PC-9 (cell line): ENCODE measurements at regions of chr11 and their contacts with region 1.

Region 1: GRCh38 chr11:28730336-28730735 is 622.1 kb downstream of the METTL15 start:
- DNase-seq: no peak
- H3K4me3 ChIP-seq: no peak overlapping the region
- H3K27ac ChIP-seq: no peak overlapping the region
- H3K4me1 ChIP-seq: no peaks in the 10 kb centered on the region
- H3K27me3 ChIP-seq: no peaks in the 10 kb centered on the region
- CTCF ChIP-seq: no peak

Region 2: DNA sequence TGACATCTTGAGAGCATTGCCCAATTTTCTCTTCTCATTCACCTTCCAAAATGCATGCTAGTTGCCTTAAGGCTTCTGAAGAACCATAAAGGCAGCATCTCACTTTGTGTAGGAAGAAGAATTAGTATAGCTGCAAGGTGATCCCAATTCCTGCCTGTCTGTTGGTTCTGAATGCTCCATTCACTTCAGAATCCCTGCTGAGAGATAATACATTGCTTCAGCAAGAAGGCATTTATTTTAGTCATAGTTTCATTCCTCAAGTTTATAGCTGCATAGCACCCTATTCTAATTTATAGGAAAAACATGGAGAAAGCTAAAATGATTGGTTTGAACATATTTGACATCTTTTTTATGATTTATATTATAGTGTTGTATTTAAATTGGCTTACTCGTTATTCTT is 440.9 kb before region 1 on chr11:
- CTCF ChIA-PET with region 1: no interaction called
- POLR2A ChIA-PET with region 1: interaction called, 11 read pairs
- intact Hi-C with region 1: no loop called
- DNase-seq: no peak
- H3K4me3 ChIP-seq: no peak overlapping the region
- H3K27ac ChIP-seq: no peak overlapping the region
- H3K4me1 ChIP-seq: no peaks in the 10 kb centered on the region
- H3K27me3 ChIP-seq: no peaks in the 10 kb centered on the region
- CTCF ChIP-seq: no peak

Region 3: GRCh38 chr11:28514391-28514790 is 215.9 kb before region 1 on chr11:
- CTCF ChIA-PET with region 1: no interaction called
- POLR2A ChIA-PET with region 1: no interaction called
- intact Hi-C with region 1: no loop called
- DNase-seq: no peak
- H3K4me3 ChIP-seq: no peak overlapping the region
- H3K27ac ChIP-seq: no peak overlapping the region
- H3K4me1 ChIP-seq: no peaks in the 10 kb centered on the region
- H3K27me3 ChIP-seq: no peaks in the 10 kb centered on the region
- CTCF ChIP-seq: no peak